Activated T-helper 1 cell treated with anti-CD3 and anti-CD28 coated beads, Interleukin-12 subunit alpha, Interleukin-12 subunit beta, Interleukin-2, Interleukin-4 antibody, amounts not matched to agents 30 ng/mL and 10 ng/mL and 1 ng/mL, durations not matched to agents 14 hours and 24 hours and 36 hours (primary cell): ENCODE measurements at regions of chr7 and their contacts with region 1.

Region 1: DNA sequence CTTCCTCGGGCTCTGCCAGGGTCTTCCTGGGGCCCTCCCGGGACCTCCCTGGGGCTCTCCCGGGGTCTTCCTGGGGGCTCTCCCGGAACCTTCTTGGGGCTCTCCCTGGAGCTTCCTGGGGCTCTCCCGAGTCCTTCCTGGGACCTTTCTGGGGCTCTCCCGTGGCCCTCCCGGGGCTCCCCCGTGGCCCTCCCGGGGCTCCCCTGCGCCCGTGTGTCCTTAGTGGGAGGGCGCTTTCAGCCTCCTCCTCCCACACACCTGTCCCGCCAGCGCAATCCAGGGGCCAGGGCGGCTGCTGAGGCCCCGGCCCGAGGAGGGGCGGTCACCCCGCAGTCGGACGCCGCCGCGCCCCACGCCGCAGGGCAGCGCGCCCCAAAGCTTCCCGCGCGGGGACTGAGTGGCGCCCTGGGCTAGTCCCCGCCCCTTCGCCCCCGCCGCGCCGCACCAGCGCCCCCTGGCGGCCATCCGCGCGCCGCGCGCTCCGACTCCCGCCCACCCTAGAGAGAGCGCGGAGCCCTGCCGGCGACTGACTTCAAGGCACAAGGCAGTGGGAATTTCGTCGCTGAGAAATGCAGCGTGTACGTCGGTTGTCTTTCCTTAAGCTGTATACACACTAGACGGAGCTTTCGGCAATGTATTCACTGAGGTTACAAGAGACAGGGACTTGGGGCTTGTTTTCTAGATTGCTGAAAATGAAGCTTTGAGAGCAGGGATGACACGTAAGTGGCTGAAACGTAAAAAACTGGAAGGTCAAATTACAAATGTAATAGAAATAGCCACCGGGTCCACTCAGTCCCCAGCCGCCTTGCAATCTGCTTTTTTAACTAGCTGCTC is 47.1 kb downstream of the INSIG1 start:
- DNase-seq: peak; percentile 73
- H3K4me3 Mint-ChIP-seq: peak overlapping the region; percentile 35
- H3K27ac Mint-ChIP-seq: no peak overlapping the region
- H3K4me1 Mint-ChIP-seq: peaks cover 7% of the 10 kb centered on the region
- H3K27me3 Mint-ChIP-seq: peaks cover 15% of the 10 kb centered on the region

Region 2: GRCh38 chr7:154913638-154914312 is 431.0 kb before region 1 on chr7:
- intact Hi-C with region 1: loop called (anchors 1 kb)
- DNase-seq: peak; percentile 75
- H3K4me3 Mint-ChIP-seq: peak overlapping the region; percentile 68
- H3K27ac Mint-ChIP-seq: no peak overlapping the region
- H3K4me1 Mint-ChIP-seq: peaks cover 4% of the 10 kb centered on the region
- H3K27me3 Mint-ChIP-seq: peaks cover 19% of the 10 kb centered on the region

Region 3: DNA sequence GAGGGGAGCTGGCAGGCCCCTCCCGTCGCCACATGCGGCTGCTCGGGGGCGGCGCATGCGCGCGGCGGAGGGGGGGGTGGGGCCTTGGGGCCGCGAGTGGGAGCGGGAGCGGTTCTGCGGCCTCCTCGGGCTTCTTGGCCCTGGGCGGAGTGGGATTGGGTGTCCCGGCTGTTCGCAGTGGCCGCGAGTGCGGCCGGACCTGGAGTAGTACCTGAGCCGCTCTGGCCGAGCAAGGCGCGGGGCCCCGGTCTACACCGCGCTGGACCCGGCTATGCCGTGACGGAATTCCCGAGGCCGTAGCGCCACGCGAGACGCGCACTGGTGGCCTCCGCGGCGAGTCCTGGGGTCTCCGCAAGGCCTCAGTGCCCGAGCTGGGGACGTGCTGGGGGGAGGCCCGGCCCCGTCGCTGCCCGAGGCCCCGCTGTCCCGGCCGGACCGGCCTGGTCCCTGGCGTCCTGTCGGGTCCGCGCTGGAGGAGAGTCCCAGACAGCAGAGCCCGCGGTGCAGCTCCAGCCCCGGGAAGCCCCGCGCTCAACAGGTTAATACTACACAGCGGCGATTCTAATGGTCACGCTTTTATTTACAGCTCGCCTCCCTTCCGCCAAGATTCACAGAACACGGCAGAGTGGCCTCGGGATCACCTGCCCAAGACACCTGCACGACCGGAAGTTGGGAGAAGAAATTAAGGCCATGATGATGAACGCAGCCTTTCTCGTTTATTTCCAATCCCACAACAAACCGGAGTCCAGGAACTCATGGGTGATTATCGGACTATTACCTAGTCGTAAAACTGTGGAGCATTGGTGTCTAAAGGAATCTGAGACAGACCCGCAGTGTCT is 341.2 kb before region 1 on chr7:
- intact Hi-C with region 1: loop called (anchors 10 kb)
- DNase-seq: peak; percentile 78
- H3K4me3 Mint-ChIP-seq: peak overlapping the region; percentile 95
- H3K27ac Mint-ChIP-seq: peak overlapping the region; percentile 94
- H3K4me1 Mint-ChIP-seq: peaks cover 6% of the 10 kb centered on the region
- H3K27me3 Mint-ChIP-seq: peaks cover 1% of the 10 kb centered on the region

Region 4: DNA sequence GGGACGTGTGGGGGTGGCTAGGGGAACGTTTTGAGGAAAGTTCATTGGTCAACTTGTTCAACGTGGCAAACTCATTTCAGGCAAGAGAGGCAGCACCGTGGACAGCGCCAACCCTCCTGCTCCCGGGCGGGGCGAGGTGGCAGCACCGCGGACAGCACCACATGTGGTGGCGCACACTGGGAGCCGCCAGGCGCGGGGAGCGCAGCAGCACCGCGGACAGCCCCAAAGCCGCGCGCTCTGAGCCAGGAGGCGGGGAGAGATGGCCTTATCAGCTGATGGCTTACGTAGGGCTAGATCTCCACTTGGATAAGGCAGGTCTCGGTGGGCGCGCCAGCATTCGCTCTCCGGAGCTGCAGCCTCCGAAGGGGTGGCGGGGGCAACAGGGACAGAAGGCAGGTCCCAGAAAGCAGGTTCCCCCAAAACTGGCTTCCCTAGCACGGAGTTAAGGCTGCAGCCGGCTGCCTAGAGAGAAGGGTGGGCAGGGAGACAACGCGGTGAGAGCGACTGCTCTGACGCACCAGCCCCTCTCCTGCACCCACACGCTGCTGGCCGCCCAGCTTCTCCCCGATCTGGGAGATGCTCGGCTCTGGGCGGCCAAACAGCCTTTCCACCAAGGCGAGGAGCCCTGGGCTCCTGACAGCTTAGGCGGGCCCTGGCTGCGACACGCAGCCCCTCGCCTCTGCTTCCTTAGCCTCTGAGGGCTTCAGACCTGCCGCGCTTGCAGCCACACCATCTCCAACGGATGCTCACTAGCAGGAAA is 274.6 kb before region 1 on chr7 and contains the start of gene HTR5A:
- intact Hi-C with region 1: loop called (anchors 2 kb)
- DNase-seq: peak; percentile 75
- H3K4me3 Mint-ChIP-seq: no peak within 1 kb of the TSS
- H3K27ac Mint-ChIP-seq: no peak within 1 kb of the TSS
- H3K4me1 Mint-ChIP-seq: no peaks in the 10 kb centered on the region
- H3K27me3 Mint-ChIP-seq: peaks cover 14% of the 10 kb centered on the region
- total RNA-seq, gene HTR5A: not detected in 2 replicates

Region 5: DNA sequence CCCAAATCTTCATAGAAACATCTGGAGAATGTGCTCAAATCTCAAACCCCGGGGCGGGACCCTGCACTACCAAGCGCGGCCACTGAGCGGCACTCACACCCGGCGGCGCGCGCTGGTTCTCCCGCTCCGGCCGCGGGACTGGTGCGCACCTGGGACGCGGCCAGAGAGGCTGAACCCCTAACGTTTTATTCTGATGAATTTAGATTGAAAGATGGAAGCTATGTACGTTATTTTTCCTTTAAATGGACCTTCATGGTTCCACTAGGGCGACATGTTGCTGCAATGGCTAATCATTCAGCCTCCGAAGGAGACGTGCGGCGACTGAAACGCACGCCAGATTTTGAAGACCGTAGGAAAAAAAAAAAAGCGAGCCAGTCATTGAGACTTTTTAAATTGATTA is 154.1 kb before region 1 on chr7:
- intact Hi-C with region 1: loop called (anchors 1 kb)
- DNase-seq: peak; percentile 44
- H3K4me3 Mint-ChIP-seq: no peak overlapping the region
- H3K27ac Mint-ChIP-seq: peak overlapping the region; percentile 55
- H3K4me1 Mint-ChIP-seq: peaks cover 17% of the 10 kb centered on the region
- H3K27me3 Mint-ChIP-seq: peaks cover 13% of the 10 kb centered on the region

Region 6: DNA sequence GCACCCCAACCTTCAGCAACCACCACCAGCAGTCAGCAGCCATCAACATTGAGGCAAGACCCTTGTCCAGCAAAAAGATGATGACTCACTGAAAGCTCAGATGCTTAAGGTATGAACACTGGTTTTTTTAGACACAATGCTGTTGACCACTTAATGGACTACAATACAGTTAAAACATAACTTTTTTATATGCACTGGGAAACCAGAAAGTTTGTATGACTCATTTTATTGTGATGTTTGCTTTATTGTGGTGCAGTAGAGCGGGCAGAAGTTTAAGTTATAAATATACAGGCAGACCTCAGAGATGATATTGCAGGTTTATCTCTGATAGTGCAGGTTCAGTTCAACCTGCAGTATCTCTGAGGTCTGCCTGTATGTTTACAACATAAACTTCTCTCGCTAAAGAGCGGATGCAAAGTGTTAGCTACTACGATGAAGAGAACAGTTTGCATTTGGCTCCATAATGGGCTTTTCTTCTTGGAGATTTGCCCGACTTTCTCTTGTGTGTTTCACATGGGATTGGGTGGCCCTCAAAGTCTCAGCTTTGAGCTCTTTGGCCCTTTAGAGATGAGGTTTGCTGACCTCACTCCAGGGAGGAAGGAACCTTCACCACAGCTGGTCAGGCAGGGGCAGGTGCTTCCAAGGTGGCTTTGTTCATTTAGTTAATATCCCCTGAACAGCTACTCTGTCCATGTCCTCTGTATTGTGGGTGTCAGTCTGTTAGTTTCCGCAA is 551.9 kb after region 1 on chr7:
- intact Hi-C with region 1: no loop called
- DNase-seq: no peak
- H3K4me3 Mint-ChIP-seq: no peak overlapping the region
- H3K27ac Mint-ChIP-seq: no peak overlapping the region
- H3K4me1 Mint-ChIP-seq: no peaks in the 10 kb centered on the region
- H3K27me3 Mint-ChIP-seq: no peaks in the 10 kb centered on the region

Region 7: DNA sequence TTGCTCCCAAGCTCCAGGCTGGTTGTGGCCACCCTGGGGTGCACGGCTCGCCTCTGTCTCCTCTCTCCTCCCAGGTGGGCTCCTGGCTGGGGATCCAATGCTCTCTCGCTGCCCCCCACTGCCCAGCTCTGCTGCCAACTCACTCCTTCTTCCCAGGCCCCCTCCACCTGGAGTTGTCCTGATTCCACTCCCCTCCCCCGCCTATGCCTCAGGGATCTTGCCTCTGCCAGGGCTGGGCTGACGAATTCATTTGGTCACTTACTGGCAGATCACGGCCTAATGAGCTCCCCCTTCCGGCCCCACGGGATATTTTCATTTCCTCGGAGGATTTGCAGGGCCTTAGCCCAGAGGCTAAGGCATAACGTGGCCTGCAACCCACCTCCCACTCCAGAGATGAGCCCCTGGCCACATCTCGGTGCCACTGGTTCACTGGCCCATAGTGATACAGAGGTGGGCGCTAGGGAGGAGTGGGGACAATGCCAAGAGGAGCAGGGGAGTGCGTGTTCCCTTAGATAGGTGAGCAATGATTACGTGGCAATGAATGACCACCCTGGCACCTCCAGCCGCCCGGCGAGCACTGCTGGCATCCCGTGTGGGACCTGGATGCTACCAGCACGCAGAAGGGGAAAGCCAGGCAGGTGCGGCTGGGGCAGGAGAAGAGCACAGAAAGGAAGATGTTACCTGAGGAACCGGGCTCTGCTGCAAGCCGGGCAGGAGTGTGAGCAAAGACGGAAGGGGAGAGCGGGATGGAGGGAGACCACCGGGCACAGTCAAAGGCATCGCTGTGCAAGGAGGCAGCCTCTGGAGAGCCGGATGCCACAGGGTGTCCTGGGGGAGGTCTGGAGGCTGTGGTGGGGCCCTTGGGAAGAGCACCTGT is 812.2 kb after region 1 on chr7:
- intact Hi-C with region 1: no loop called
- DNase-seq: no peak
- H3K4me3 Mint-ChIP-seq: no peak overlapping the region
- H3K27ac Mint-ChIP-seq: no peak overlapping the region
- H3K4me1 Mint-ChIP-seq: no peaks in the 10 kb centered on the region
- H3K27me3 Mint-ChIP-seq: no peaks in the 10 kb centered on the region